ENCODE measurements at regions of chr3 and their contacts with region 1.

Region 1: DNA sequence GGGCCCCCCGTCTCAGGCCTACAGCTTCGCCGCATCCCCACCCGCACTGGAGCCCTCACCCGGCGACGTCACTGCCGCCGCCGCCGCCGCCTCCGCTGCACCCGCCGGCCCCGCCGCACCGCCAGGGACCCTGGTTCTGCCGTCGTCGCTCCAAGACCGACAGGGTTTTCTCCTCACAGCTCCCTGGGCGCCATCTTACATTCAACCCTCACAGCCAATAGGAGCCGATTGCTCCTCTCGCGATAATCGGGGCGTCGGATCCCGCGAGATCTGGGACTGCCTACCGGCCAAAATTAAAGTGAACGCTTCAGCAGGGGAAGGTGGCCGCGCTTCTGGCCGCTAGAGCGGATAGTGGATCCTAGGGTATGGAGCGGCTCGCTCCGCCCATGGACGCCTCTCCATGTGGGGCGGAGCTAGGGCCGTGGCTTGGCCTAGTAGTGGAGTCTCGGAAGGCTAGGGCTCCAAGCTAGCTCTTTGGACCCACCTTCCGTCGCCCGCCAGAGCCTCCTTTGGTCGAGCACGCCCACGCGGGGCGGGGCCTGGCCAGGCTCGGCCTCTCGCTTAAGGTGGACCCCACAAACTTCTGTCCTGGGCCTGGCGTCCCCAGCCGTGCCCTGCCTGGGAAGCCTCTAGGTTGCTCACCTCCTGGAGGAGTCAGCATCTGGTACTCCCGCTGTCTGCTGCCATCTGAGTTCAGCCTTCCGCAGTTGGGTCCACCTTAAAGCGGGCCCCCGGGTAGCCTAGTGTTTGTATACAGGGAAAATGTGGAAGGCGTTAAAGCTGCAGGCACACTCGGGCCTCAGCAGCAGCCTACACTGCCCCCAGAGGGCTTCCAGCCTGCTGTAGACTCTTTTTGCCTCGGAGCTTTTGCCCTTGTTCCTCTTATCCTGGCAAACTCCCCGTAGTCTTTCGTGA is at the start of gene QRICH1:
- DNase-seq: peak; percentile 92 to 98 (median 96)
- H3K4me3 ChIP-seq: peak within 1 kb of the TSS; percentile 97
- H3K4me3 Mint-ChIP-seq: peak within 1 kb of the TSS; percentile 90 to 98 (median 93)
- H3K27ac ChIP-seq: peak within 1 kb of the TSS; percentile 81
- H3K27ac Mint-ChIP-seq: peak within 1 kb of the TSS; percentile 94 to 98 (median 96)
- H3K4me1 ChIP-seq: peaks cover 36% of the 10 kb centered on the region
- H3K4me1 Mint-ChIP-seq: peaks cover 29 to 42% (median 40%) of the 10 kb centered on the region in 3 donors
- H3K27me3 ChIP-seq: no peaks in the 10 kb centered on the region
- H3K27me3 Mint-ChIP-seq: no peaks in the 10 kb centered on the region
- total RNA-seq, gene QRICH1: 122 to 134 TPM

Region 2: GRCh38 chr3:47877290-47877689 is 1216.8 kb before region 1 on chr3:
- CTCF ChIA-PET with region 1: no interaction called
- POLR2A ChIA-PET with region 1: no interaction called
- DNase-seq: no peak
- H3K4me3 ChIP-seq: no peak overlapping the region
- H3K4me3 Mint-ChIP-seq: no peak overlapping the region
- H3K27ac ChIP-seq: no peak overlapping the region
- H3K27ac Mint-ChIP-seq: peak overlapping the region in 7 of 8 donors; percentile 20 to 78 (median 77)
- H3K4me1 ChIP-seq: no peaks in the 10 kb centered on the region
- H3K4me1 Mint-ChIP-seq: peaks cover 15 to 18% (median 17%) of the 10 kb centered on the region in 3 donors
- H3K27me3 ChIP-seq: no peaks in the 10 kb centered on the region
- H3K27me3 Mint-ChIP-seq: no peaks in the 10 kb centered on the region

Region 3: DNA sequence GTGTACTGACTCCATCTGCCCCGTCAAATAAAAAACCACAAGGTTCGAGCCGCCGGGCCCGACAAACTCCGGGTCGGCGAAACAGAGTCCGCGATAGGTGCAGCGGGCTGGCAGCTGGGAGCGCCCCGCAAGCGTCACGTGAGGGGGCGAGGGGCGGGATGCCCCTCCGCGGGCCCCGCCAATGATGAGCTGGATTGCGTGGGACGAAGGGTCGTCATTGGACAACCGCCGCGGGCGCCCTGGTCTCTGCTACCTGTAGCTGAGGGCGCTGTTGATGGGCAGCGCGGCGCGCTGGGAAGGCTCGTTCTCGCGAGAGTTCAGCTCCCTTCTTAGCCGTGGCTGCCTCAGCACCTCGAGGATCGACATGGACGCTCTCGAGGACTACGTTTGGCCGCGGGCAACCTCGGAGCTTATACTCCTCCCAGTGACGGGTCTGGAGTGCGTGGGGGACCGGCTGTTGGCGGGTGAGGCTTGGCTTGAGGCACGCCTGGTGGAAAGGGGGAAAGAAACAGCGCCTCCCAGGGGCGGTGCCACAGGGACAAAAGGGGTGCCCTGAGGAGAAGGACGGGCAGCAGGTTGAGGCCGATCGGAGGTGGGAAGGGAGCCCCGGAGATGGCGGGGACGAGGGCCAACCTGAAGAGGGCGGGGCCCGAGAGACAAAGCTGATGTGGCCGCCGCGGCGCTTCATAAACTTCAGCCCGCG is 86.9 kb before region 1 on chr3 and contains the start of gene WDR6:
- CTCF ChIA-PET with region 1: interaction called, 8 read pairs
- POLR2A ChIA-PET with region 1: interaction called, 21 read pairs
- DNase-seq: peak; percentile 96 to 98 (median 97)
- H3K4me3 ChIP-seq: peak within 1 kb of the TSS; percentile 98
- H3K4me3 Mint-ChIP-seq: peak within 1 kb of the TSS; percentile 89 to 100 (median 98)
- H3K27ac ChIP-seq: peak within 1 kb of the TSS; percentile 88
- H3K27ac Mint-ChIP-seq: peak within 1 kb of the TSS; percentile 89 to 100 (median 99)
- H3K4me1 ChIP-seq: peaks cover 14% of the 10 kb centered on the region
- H3K4me1 Mint-ChIP-seq: peaks cover 22 to 38% (median 37%) of the 10 kb centered on the region in 3 donors
- H3K27me3 ChIP-seq: no peaks in the 10 kb centered on the region
- H3K27me3 Mint-ChIP-seq: peaks cover 0 to 3% of the 10 kb centered on the region in 2 donors
- total RNA-seq, gene WDR6: 158 to 167 TPM

Region 4: GRCh38 chr3:49021813-49022687 is 72.1 kb before region 1 on chr3 and contains the start of gene NDUFAF3:
- CTCF ChIA-PET with region 1: interaction called, 25 read pairs
- POLR2A ChIA-PET with region 1: interaction called, 35 read pairs
- DNase-seq: peak; percentile 88 to 93 (median 90)
- H3K4me3 ChIP-seq: peak within 1 kb of the TSS; percentile 95
- H3K4me3 Mint-ChIP-seq: peak within 1 kb of the TSS; percentile 91 to 97 (median 95)
- H3K27ac ChIP-seq: peak within 1 kb of the TSS; percentile 99
- H3K27ac Mint-ChIP-seq: peak within 1 kb of the TSS; percentile 95 to 99 (median 98)
- H3K4me1 ChIP-seq: peaks cover 38% of the 10 kb centered on the region
- H3K4me1 Mint-ChIP-seq: peaks cover 30 to 73% (median 36%) of the 10 kb centered on the region in 3 donors
- H3K27me3 ChIP-seq: no peaks in the 10 kb centered on the region
- H3K27me3 Mint-ChIP-seq: peaks cover 0 to 2% of the 10 kb centered on the region in 2 donors
- total RNA-seq, gene NDUFAF3: 86.3 to 88.8 TPM

Region 5: GRCh38 chr3:49076646-49077045 is 17.5 kb before region 1 on chr3:
- CTCF ChIA-PET with region 1: interaction called, 10 read pairs
- POLR2A ChIA-PET with region 1: no interaction called
- DNase-seq: no peak
- H3K4me3 ChIP-seq: no peak overlapping the region
- H3K4me3 Mint-ChIP-seq: peak overlapping the region in 1 of 7 donors; percentile 8
- H3K27ac ChIP-seq: no peak overlapping the region
- H3K27ac Mint-ChIP-seq: peak overlapping the region in 1 of 8 donors; percentile 37
- H3K4me1 ChIP-seq: no peaks in the 10 kb centered on the region
- H3K4me1 Mint-ChIP-seq: peaks cover 12 to 41% (median 18%) of the 10 kb centered on the region in 3 donors
- H3K27me3 ChIP-seq: no peaks in the 10 kb centered on the region
- H3K27me3 Mint-ChIP-seq: no peaks in the 10 kb centered on the region

Region 6: DNA sequence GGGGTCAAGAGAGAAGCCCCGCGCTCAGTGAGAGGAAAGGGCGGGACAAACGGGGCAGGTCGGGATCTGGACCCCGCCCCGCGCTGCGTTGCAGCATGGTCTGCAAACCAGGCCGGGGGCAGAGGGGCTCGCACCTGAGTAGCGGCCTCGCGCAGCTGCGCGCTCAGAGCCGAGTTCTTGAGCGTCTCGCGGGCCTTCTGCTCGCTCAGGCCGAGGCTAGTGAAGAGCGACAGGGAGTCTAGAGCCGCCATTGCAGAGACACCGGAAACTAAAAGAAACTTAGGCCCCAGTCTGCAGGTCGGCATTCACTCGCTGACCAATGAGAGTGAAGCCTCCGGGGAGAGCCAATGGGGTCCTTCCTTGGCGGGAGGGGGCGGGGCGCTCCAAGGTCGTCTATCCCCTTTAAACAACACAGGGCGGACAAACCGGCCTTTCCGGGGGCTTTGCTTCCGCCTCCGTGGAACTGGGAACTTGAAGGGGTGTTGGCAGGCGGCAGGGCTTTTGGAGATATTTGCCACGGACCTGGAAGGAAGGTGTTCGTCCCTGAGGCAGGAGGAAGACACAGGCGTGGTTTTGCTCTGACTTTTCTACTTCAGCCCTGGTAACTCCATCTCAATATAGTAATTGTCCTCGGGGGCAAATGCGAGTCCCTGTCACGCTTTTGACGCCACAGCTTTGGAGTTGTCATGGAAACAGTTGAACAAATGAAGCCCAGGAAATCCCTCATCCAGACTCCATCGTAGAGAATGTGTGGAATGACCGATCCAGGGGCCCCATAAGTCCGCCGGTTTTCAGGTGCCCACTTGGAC is 10.6 kb after region 1 on chr3 and contains the start of gene QARS1:
- CTCF ChIA-PET with region 1: interaction called, 14 read pairs
- POLR2A ChIA-PET with region 1: interaction called, 41 read pairs
- DNase-seq: peak; percentile 83 to 93 (median 88)
- H3K4me3 ChIP-seq: peak within 1 kb of the TSS; percentile 97
- H3K4me3 Mint-ChIP-seq: peak within 1 kb of the TSS; percentile 97 to 99 (median 98)
- H3K27ac ChIP-seq: peak within 1 kb of the TSS; percentile 84
- H3K27ac Mint-ChIP-seq: peak within 1 kb of the TSS; percentile 95 to 99 (median 98)
- H3K4me1 ChIP-seq: peaks cover 22% of the 10 kb centered on the region
- H3K4me1 Mint-ChIP-seq: peaks cover 24 to 32% (median 30%) of the 10 kb centered on the region in 3 donors
- H3K27me3 ChIP-seq: no peaks in the 10 kb centered on the region
- H3K27me3 Mint-ChIP-seq: no peaks in the 10 kb centered on the region
- total RNA-seq, gene QARS1: 233 to 244 TPM

Region 7: GRCh38 chr3:49120438-49121131 is 26.5 kb after region 1 on chr3 and contains the start of gene USP19:
- CTCF ChIA-PET with region 1: interaction called, 30 read pairs
- POLR2A ChIA-PET with region 1: interaction called, 45 read pairs
- DNase-seq: peak; percentile 91 to 96 (median 95)
- H3K4me3 ChIP-seq: peak within 1 kb of the TSS; percentile 85
- H3K4me3 Mint-ChIP-seq: peak within 1 kb of the TSS; percentile 85 to 91 (median 88)
- H3K27ac ChIP-seq: peak within 1 kb of the TSS; percentile 92
- H3K27ac Mint-ChIP-seq: peak within 1 kb of the TSS; percentile 88 to 97 (median 92)
- H3K4me1 ChIP-seq: peaks cover 21% of the 10 kb centered on the region
- H3K4me1 Mint-ChIP-seq: peaks cover 13 to 41% (median 17%) of the 10 kb centered on the region in 3 donors
- H3K27me3 ChIP-seq: no peaks in the 10 kb centered on the region
- H3K27me3 Mint-ChIP-seq: no peaks in the 10 kb centered on the region
- total RNA-seq, gene USP19: 71.8 to 73.9 TPM